SK-N-SH (cell line): ENCODE measurements at regions of chr10 and their contacts with region 1.

Region 1: DNA sequence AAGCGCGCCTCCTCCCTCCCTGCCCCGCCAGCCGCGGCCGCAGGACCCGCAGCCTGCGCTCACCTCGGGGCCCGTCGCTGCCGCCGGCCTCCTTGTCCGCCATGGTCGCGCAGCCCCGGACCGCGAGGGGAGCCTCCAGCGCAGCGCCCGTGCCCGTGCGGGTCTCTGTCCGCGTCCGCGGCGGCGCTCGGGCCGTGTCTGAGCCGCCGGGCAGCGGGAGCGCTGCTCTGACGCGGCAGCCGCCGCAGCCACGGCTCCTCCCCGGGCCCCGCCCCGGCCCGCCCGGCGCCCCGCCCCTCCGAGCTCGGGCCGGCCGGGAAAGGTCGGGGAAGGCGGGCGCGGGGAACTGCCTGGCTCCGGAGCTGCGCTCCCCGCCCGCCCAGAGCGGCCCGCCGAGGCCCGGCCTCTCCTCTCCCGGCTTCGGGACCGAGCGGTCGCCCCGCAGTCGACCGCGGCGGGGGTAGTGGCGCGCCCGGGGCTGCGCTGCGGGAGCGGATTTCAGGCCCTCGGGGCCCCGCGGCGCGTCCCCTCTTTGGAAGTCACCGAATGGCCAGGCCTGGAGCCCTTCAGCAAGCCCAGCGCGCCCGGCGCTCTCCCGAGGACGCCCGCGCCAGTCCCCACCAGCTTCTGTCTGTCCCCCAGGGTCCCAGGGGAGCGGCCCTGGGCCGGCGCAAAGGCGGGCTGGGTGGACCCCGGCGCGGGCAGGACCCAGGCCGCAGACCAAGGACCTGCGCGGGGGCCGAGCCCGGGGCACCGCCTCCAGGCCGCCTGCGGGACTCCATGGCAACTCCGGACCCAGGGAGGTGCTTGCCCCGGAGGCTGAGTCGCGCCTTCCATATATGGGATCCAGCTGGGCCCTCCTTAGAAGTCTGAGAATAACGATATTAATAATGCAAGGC is at the start of gene HSPA12A:
- DNase-seq: peak; percentile 95
- H3K4me3 ChIP-seq: peak within 1 kb of the TSS; percentile 70 to 74
- H3K27ac ChIP-seq: peak within 1 kb of the TSS; percentile 63 to 72
- H3K4me1 ChIP-seq: peaks cover 0 to 28% of the 10 kb centered on the region in 2 experiments; a peak in 1 of 4 replicates
- H3K27me3 ChIP-seq: no peaks in the 10 kb centered on the region
- CTCF ChIP-seq: no peak
- EP300 ChIP-seq: no peak
- RAD21 ChIP-seq: no peak
- polyA plus RNA-seq, gene HSPA12A: 2.9 and 3.3 TPM in 2 replicates

Region 2: DNA sequence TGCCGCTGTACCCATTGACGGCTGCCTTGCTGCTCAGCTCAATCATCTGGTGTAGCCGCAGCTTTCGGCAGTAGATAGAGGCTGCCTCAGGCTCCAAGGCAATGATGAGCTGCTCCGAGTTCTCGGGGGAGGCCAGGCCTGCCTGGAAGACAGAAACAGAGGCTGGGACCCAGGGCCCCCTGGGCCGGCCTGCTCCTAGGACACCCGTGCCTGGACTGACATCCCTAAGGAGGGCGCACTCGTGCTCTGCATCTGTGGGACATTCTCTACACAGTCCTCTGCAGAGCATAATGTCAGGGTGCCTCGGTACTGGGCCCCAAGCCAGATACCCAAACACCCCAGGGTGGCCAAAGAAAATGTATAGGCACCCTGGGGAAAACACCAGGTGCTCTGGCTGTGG is 58.8 kb before region 1 on chr10:
- CTCF ChIA-PET with region 1: interaction called, 14 read pairs
- POLR2A ChIA-PET with region 1: no interaction called
- DNase-seq: no peak
- H3K4me3 ChIP-seq: no peak overlapping the region
- H3K27ac ChIP-seq: no peak overlapping the region
- H3K4me1 ChIP-seq: peaks cover 5 to 6% of the 10 kb centered on the region in 2 experiments; a peak in 1 of 4 replicates
- H3K27me3 ChIP-seq: no peaks in the 10 kb centered on the region
- CTCF ChIP-seq: no peak
- EP300 ChIP-seq: no peak
- RAD21 ChIP-seq: no peak

Region 3: GRCh38 chr10:116690356-116691322 is 52.0 kb before region 1 on chr10:
- CTCF ChIA-PET with region 1: interaction called, 13 read pairs
- POLR2A ChIA-PET with region 1: no interaction called
- DNase-seq: no peak
- H3K4me3 ChIP-seq: no peak overlapping the region
- H3K27ac ChIP-seq: no peak overlapping the region
- H3K4me1 ChIP-seq: peaks cover 5 to 6% of the 10 kb centered on the region in 2 experiments; a peak in 1 of 4 replicates
- H3K27me3 ChIP-seq: no peaks in the 10 kb centered on the region
- CTCF ChIP-seq: no peak
- EP300 ChIP-seq: no peak
- RAD21 ChIP-seq: peak; percentile 19; the same call in 1 of the 2 replicates

Region 4: GRCh38 chr10:116716381-116716780 is 26.2 kb before region 1 on chr10:
- CTCF ChIA-PET with region 1: interaction called, 27 read pairs
- POLR2A ChIA-PET with region 1: interaction called, 3 read pairs
- DNase-seq: no peak
- H3K4me3 ChIP-seq: no peak overlapping the region
- H3K27ac ChIP-seq: peak overlapping the region in 1 of 2 experiments; percentile 83; a peak in 2 of 4 replicates
- H3K4me1 ChIP-seq: peaks cover 0 to 73% of the 10 kb centered on the region in 2 experiments; a peak in 2 of 4 replicates
- H3K27me3 ChIP-seq: no peaks in the 10 kb centered on the region
- CTCF ChIP-seq: no peak
- EP300 ChIP-seq: no peak
- RAD21 ChIP-seq: no peak

Region 5: GRCh38 chr10:116721547-116722392 is 20.8 kb before region 1 on chr10:
- CTCF ChIA-PET with region 1: interaction called, 27 read pairs
- POLR2A ChIA-PET with region 1: interaction called, 6 read pairs
- DNase-seq: peak; percentile 74
- H3K4me3 ChIP-seq: no peak overlapping the region
- H3K27ac ChIP-seq: peak overlapping the region in 1 of 2 experiments; percentile 98; a peak in 2 of 4 replicates
- H3K4me1 ChIP-seq: peaks cover 0 to 80% of the 10 kb centered on the region in 2 experiments; a peak in 2 of 4 replicates
- H3K27me3 ChIP-seq: no peaks in the 10 kb centered on the region
- CTCF ChIP-seq: no peak
- EP300 ChIP-seq: peak in 1 of 2 experiments; percentile 93; a peak in 2 of 4 replicates
- RAD21 ChIP-seq: no peak